Activated T-helper 1 cell treated with anti-CD3 and anti-CD28 coated beads, Interleukin-12 subunit alpha, Interleukin-12 subunit beta, Interleukin-2, Interleukin-4 antibody, amounts not matched to agents 30 ng/mL and 10 ng/mL and 1 ng/mL, durations not matched to agents 14 hours and 24 hours and 36 hours (primary cell): ENCODE measurements at regions of chr20 and their contacts with region 1.

Region 1: DNA sequence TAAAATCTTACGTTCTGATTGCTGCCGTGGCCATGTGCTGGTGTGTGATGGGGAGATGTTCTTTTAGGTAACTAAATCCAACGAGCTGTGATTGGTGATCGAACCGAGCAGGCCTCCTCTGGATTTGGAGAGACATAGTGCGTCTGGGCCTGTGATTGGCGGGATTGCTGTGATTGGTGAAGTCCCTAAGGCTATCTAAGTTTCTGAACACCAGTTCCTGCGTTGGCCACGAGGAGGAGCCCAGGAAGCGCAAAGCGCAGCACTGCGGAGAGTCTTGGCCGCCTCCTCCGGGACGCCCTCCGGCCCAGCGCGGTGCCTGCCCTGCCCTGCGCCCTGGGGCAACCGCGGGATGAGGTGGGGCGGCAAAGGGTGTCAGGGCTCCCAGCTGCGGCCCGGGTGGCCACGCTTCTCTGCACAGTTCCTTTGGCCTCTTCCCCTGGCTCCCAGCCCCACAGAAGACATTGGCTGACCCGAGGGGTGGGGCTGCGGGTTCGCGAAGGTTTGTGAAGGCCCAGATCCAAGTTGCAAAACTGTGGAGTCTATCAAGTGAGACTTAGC is 33.0 kb downstream of the HNF4A start:
- DNase-seq: peak; percentile 57
- H3K4me3 Mint-ChIP-seq: peak overlapping the region; percentile 17
- H3K27ac Mint-ChIP-seq: no peak overlapping the region
- H3K4me1 Mint-ChIP-seq: peaks cover 5% of the 10 kb centered on the region
- H3K27me3 Mint-ChIP-seq: peaks cover 6% of the 10 kb centered on the region

Region 2: DNA sequence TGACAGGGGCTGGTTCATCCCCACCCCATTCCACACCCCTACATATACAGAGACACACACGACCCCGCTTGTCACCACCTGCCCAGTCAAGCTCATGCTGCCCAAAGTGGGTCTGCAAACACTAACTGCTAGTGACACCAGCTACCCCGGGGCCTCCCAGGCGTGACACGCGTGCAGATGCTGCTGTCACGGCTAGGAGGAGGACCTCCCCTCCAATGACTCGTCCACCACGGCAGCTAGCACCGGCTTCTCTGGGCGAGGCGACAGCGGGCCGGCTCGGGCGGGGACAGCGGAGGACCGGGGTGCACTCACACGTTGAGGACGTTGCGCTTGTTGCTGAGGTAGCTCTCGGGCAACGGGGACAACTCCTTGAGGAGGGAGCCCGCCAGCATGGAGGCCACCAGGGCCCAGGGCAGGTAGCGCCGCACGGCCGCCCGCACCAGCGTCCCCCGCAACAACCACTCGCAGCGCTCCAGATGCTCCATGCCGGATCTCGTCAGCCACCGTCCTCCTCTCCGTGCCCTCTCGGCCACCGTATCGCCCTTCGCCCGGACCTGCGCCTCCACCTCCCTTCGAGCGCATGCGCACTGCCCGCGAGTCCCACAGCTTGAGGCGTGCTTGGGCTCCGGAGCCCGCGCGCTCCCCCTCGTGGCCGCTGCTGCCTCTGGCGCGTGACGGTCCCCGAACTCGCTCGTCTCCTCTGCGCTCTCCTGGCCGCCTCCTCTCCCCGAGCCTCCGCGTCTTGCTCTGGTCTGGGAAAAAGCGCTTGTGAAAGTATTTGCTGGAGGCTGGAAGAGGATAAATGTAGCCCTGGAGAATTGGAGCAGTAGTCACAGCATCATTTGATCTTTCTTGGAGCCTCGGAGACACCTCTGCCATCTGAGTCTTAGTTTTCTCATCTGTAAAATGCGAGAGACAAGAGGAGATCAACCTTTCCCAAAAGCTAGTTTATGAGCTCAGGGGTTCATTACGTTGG is 77.6 kb before region 1 on chr20 and contains the start of gene FITM2:
- intact Hi-C with region 1: loop called (anchors 2 kb)
- DNase-seq: peak; percentile 97
- H3K4me3 Mint-ChIP-seq: peak within 1 kb of the TSS; percentile 86
- H3K27ac Mint-ChIP-seq: peak within 1 kb of the TSS; percentile 87
- H3K4me1 Mint-ChIP-seq: peaks cover 18% of the 10 kb centered on the region
- H3K27me3 Mint-ChIP-seq: peaks cover 4% of the 10 kb centered on the region
- total RNA-seq, gene FITM2: 2.2 TPM in 2 replicates

Region 3: DNA sequence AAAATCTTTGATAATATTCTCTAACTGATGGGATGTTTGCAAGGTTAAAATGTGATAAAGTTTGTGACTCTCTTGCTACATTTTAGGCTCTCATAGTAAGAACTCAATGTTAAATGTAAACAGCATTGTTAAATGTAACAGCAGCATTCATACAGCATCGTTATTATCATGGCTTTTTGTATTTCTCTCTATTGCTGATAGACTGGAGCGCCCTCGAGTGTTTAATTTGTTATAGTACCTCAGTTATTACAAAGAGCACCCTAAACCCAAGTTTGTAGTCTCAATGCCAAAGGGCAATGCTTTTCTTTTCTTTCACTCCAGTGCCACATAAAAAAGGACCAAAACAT is 72.2 kb after region 1 on chr20:
- intact Hi-C with region 1: loop called (anchors 1 kb)
- DNase-seq: no peak
- H3K4me3 Mint-ChIP-seq: no peak overlapping the region
- H3K27ac Mint-ChIP-seq: no peak overlapping the region
- H3K4me1 Mint-ChIP-seq: no peaks in the 10 kb centered on the region
- H3K27me3 Mint-ChIP-seq: peaks cover 2% of the 10 kb centered on the region

Region 4: DNA sequence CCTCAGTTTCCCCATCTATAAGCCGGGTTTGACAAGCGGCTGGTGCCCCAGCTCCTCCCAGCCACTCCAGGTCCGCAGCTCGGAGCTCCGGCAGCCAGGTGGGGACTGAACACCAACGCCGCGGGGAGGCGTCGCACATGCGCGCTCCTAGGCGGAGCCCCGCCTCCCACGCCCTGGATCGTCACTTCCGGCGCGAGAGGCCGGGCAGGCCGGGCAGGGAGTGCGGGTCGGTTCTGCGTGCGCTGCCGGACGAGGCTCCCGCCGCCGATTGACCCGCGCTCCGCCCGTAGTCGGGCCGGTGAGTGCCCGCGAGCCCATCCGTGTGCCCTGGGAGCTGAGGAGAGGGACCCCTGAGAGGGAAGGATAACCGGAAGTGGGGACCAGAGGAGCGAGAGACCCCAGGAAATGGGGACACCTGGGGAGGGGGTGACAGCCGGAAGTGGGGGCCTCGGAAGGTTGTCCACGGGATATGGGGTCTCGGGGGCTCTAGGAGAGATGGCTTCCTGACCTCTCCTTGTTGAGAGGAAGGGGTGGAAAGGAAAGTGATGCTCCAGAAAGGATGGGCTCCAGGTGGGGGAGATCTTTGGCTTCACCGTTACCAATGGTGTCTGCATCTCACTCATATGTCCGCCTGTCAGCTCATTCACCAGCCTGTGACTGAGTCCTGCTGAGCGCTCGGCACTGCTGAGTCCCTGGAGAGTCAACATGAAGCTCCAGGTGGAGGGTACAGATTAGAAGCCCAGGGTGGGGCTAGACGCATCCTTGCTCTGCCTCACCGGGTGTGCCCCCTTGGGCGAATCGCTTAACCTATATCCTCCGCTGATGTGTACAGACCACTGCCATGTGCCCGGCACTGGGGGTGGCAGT is 87.4 kb after region 1 on chr20 and contains the start of gene TTPAL:
- intact Hi-C with region 1: loop called (anchors 5 kb)
- DNase-seq: peak; percentile 90
- H3K4me3 Mint-ChIP-seq: peak within 1 kb of the TSS; percentile 95
- H3K27ac Mint-ChIP-seq: peak within 1 kb of the TSS; percentile 93
- H3K4me1 Mint-ChIP-seq: peaks cover 20% of the 10 kb centered on the region
- H3K27me3 Mint-ChIP-seq: peaks cover 3% of the 10 kb centered on the region
- total RNA-seq, gene TTPAL: 22.9 and 24.7 TPM in 2 replicates

Region 5: GRCh38 chr20:44733341-44734069 is 345.0 kb after region 1 on chr20:
- intact Hi-C with region 1: loop called (anchors 1 kb)
- DNase-seq: peak; percentile 45
- H3K4me3 Mint-ChIP-seq: no peak overlapping the region
- H3K27ac Mint-ChIP-seq: no peak overlapping the region
- H3K4me1 Mint-ChIP-seq: peaks cover 42% of the 10 kb centered on the region
- H3K27me3 Mint-ChIP-seq: peaks cover 2% of the 10 kb centered on the region

Region 6: DNA sequence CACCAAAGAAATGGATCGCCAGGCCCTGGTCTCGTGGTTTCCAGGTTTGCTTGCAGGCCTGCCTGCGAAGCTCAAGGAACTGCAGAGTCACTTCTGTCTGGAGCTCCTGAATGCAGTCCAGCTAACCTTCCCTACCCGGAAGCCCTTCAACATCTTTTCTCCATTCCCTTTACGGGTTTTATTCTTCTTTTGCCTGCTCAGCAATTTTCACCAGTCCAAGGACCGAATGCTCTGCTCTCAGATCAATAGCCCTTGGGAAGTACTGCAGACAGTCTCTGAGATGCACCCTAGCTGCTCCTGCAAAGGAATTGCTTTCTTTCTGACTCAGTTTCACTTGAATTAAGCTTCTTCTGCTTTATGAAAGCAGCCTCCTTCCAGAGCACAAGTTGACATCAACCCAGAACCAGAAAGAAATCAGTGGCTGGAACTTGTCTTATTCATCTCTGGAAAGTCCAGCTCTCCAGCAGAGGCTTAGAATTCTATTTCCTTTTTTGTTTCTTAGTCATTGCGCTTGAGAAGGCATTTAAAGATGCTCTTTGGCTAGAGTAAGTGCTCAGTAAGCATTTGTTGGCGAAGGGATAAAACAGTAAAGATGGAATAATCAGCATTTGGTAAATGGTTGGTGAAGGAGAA is 478.3 kb after region 1 on chr20:
- intact Hi-C with region 1: loop called (anchors 1 kb)
- DNase-seq: no peak
- H3K4me3 Mint-ChIP-seq: peak overlapping the region; percentile 35
- H3K27ac Mint-ChIP-seq: no peak overlapping the region
- H3K4me1 Mint-ChIP-seq: peaks cover 14% of the 10 kb centered on the region
- H3K27me3 Mint-ChIP-seq: peaks cover 16% of the 10 kb centered on the region